ENCODE measurements at regions of chr7 and their contacts with region 1.

Region 1: GRCh38 chr7:139602143-139602722 is 78.7 kb downstream of the CLEC2L start:
- DNase-seq: peak; percentile 65
- H3K4me3 ChIP-seq: no peak overlapping the region
- H3K27ac ChIP-seq: no peak overlapping the region
- H3K4me1 ChIP-seq: peaks cover 0 to 18% of the 10 kb centered on the region in 2 experiments; a peak in 1 of 4 replicates
- H3K27me3 ChIP-seq: no peaks in the 10 kb centered on the region
- CTCF ChIP-seq: peak; percentile 86
- EP300 ChIP-seq: no peak
- RAD21 ChIP-seq: peak; percentile 76

Region 2: GRCh38 chr7:139230774-139231512 is 371.3 kb before region 1 on chr7 and contains the start of gene UBN2:
- CTCF ChIA-PET with region 1: no interaction called
- POLR2A ChIA-PET with region 1: no interaction called
- DNase-seq: peak; percentile 99
- H3K4me3 ChIP-seq: peak within 1 kb of the TSS; percentile 99 to 100
- H3K27ac ChIP-seq: peak within 1 kb of the TSS; percentile 87 to 99
- H3K4me1 ChIP-seq: peaks cover 0 to 29% of the 10 kb centered on the region in 2 experiments; a peak in 2 of 4 replicates
- H3K27me3 ChIP-seq: no peaks in the 10 kb centered on the region
- CTCF ChIP-seq: no peak
- EP300 ChIP-seq: no peak
- RAD21 ChIP-seq: no peak
- polyA plus RNA-seq, gene UBN2: 2.0 and 2.9 TPM in 2 replicates

Region 3: GRCh38 chr7:139321071-139321745 is 281.0 kb before region 1 on chr7:
- CTCF ChIA-PET with region 1: no interaction called
- POLR2A ChIA-PET with region 1: no interaction called
- DNase-seq: no peak
- H3K4me3 ChIP-seq: no peak overlapping the region
- H3K27ac ChIP-seq: no peak overlapping the region
- H3K4me1 ChIP-seq: no peaks in the 10 kb centered on the region
- H3K27me3 ChIP-seq: no peaks in the 10 kb centered on the region
- CTCF ChIP-seq: peak; percentile 56
- EP300 ChIP-seq: no peak
- RAD21 ChIP-seq: peak; percentile 49

Region 4: GRCh38 chr7:139382439-139382838 is 219.8 kb before region 1 on chr7:
- CTCF ChIA-PET with region 1: no interaction called
- POLR2A ChIA-PET with region 1: no interaction called
- DNase-seq: no peak
- H3K4me3 ChIP-seq: no peak overlapping the region
- H3K27ac ChIP-seq: no peak overlapping the region
- H3K4me1 ChIP-seq: no peaks in the 10 kb centered on the region
- H3K27me3 ChIP-seq: no peaks in the 10 kb centered on the region
- CTCF ChIP-seq: no peak
- EP300 ChIP-seq: no peak
- RAD21 ChIP-seq: no peak

Region 5: GRCh38 chr7:139576179-139576890 is 25.9 kb before region 1 on chr7:
- CTCF ChIA-PET with region 1: interaction called, 14 read pairs
- POLR2A ChIA-PET with region 1: no interaction called
- DNase-seq: no peak
- H3K4me3 ChIP-seq: no peak overlapping the region
- H3K27ac ChIP-seq: no peak overlapping the region
- H3K4me1 ChIP-seq: no peaks in the 10 kb centered on the region
- H3K27me3 ChIP-seq: no peaks in the 10 kb centered on the region
- CTCF ChIP-seq: no peak
- EP300 ChIP-seq: no peak
- RAD21 ChIP-seq: no peak

Region 6: DNA sequence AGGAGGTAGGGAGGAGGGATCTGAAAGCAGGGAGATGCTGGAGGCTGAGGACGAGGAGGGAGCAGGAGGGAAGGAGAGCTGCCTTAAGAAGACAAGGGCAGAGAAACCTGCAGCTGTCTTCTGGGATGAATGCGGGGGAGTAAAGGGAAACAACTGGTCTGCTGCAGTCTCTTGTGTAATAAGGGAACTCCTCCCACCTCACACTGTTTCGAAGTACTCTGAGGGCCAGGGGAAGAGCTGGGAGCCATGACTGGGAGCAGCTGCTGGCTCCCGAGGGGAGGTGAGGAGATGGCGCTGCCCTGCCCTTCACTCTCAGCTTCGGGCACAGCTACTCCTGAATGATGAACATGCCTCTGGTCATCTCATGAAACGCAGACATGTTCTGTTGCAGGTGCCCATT is 13.6 kb before region 1 on chr7:
- CTCF ChIA-PET with region 1: interaction called, 30 read pairs
- POLR2A ChIA-PET with region 1: interaction called, 3 read pairs
- DNase-seq: no peak
- H3K4me3 ChIP-seq: no peak overlapping the region
- H3K27ac ChIP-seq: no peak overlapping the region
- H3K4me1 ChIP-seq: no peaks in the 10 kb centered on the region
- H3K27me3 ChIP-seq: no peaks in the 10 kb centered on the region
- CTCF ChIP-seq: no peak
- EP300 ChIP-seq: no peak
- RAD21 ChIP-seq: no peak

Region 7: DNA sequence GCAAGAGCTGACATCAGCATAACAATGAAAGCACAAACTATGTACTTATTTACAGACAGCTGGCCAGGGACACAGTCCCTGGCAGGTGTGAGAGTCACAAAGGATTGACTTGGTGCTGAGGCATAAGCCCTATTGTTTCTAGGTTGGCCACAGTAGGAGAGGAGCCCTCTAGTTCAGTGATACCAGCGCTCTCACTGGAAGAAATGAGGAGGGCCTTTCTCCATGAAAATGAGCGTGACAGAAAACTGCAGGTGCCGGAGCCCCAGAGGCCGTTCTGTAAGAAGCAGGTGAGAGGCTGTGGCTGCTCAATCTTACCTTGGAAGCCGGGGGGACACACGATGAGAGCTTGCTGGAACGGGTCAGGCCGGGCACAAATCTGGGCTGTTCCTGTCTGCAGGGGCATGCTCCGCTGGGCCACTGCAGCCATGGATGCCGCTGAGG is 11.8 kb after region 1 on chr7:
- CTCF ChIA-PET with region 1: interaction called, 39 read pairs
- POLR2A ChIA-PET with region 1: no interaction called
- DNase-seq: no peak
- H3K4me3 ChIP-seq: no peak overlapping the region
- H3K27ac ChIP-seq: no peak overlapping the region
- H3K4me1 ChIP-seq: no peaks in the 10 kb centered on the region; a peak in 1 of 4 replicates
- H3K27me3 ChIP-seq: no peaks in the 10 kb centered on the region
- CTCF ChIP-seq: no peak
- EP300 ChIP-seq: no peak
- RAD21 ChIP-seq: no peak

Region 8: DNA sequence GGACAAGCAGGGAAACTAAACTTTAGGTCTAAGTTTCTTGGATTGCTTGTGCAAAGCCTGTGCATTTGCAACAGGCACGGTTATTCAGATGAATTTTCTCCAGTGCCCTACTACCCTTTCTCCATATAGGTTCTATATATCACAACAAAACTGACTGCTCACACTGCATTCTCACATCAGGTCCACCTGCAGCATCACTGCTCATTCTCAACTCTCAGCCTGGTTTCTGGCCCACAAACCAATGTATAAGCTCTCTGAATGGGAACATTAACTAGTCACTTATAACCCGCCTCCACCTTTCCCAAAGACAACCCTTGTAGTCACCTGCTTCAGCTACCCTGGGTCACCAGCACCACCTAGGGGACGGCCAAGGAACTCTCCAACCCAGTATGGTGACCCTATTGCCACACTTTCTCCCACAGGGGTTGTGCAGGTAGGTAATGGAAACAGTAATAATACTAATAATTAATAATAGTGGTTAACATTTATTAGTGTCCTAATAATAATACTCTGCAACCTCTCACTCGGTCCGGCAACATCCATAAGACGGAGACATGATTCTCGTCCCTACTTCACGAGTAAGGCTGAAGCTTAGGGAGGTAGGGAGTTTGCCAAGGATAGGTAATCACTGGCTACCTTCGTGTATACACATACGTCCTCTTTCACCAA is 18.6 kb after region 1 on chr7:
- CTCF ChIA-PET with region 1: interaction called, 39 read pairs
- POLR2A ChIA-PET with region 1: no interaction called
- DNase-seq: peak; percentile 67
- H3K4me3 ChIP-seq: no peak overlapping the region
- H3K27ac ChIP-seq: no peak overlapping the region
- H3K4me1 ChIP-seq: no peaks in the 10 kb centered on the region
- H3K27me3 ChIP-seq: no peaks in the 10 kb centered on the region
- CTCF ChIP-seq: peak; percentile 76
- EP300 ChIP-seq: no peak
- RAD21 ChIP-seq: peak; percentile 79

Region 9: DNA sequence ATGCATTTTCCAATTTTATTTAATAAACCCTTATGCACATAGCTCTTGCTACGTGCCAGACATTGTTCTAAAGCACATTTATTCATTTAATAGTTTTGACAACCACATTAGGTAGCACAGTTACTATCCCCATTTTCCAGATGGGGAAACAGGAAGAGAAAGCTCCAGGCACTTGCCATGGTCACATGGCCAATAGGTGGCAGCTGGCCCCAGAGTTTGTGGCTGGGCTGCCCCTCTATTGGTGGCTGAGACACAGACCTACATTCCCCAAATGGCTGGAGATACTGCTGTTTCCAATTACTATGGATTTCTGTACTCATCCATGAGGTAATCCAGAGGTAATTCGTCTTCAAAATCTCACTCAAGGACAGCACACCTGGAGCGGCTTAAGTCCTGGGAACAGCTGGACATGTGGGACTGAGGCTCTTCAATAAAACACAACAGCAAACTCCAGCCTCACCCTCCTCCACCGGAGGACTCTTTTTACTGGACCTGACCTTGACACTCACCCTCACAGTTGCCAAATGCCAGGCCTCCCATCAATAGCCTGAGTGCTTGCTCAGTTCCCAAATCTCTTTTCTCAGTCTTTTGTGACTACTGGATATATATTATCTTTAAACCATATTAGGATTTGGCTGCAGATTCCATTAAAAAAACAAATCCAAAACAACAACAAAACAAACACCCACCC is 27.3 kb after region 1 on chr7:
- CTCF ChIA-PET with region 1: interaction called, 17 read pairs
- POLR2A ChIA-PET with region 1: no interaction called
- DNase-seq: no peak
- H3K4me3 ChIP-seq: no peak overlapping the region
- H3K27ac ChIP-seq: no peak overlapping the region
- H3K4me1 ChIP-seq: no peaks in the 10 kb centered on the region
- H3K27me3 ChIP-seq: no peaks in the 10 kb centered on the region
- CTCF ChIP-seq: no peak
- EP300 ChIP-seq: no peak
- RAD21 ChIP-seq: peak; percentile 25

Region 10: DNA sequence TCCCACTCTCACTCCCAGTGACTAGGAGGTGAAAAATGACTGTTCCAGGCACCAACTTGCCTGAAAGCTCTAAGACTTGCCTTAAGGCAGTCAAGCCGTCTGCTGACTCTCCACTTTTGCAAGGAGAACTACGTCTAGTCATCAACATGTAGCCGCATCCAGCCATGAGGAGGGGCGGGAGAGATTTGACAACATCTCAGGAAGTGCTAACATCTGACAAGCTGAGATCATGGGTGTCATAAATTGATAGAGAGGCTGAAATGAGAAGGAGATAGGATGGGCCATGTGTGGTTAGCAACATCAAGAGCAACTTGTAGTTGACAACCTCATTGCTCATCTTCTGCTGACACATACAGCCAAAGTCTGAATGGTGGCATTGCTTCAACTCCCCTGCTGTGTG is 217.9 kb after region 1 on chr7:
- CTCF ChIA-PET with region 1: no interaction called
- POLR2A ChIA-PET with region 1: no interaction called
- DNase-seq: no peak
- H3K4me3 ChIP-seq: no peak overlapping the region
- H3K27ac ChIP-seq: no peak overlapping the region
- H3K4me1 ChIP-seq: peaks cover 0 to 2% of the 10 kb centered on the region in 2 experiments; a peak in 1 of 4 replicates
- H3K27me3 ChIP-seq: peaks cover 26% of the 10 kb centered on the region; the same call in 1 of the 2 replicates
- CTCF ChIP-seq: no peak
- EP300 ChIP-seq: no peak
- RAD21 ChIP-seq: no peak

Region 11: GRCh38 chr7:139995017-139995931 is 393.0 kb after region 1 on chr7:
- CTCF ChIA-PET with region 1: interaction called, 12 read pairs
- POLR2A ChIA-PET with region 1: no interaction called
- DNase-seq: no peak
- H3K4me3 ChIP-seq: no peak overlapping the region
- H3K27ac ChIP-seq: no peak overlapping the region
- H3K4me1 ChIP-seq: peaks cover 0 to 9% of the 10 kb centered on the region in 2 experiments; a peak in 1 of 4 replicates
- H3K27me3 ChIP-seq: no peaks in the 10 kb centered on the region
- CTCF ChIP-seq: no peak
- EP300 ChIP-seq: no peak
- RAD21 ChIP-seq: no peak